AG04450 (cell line): ENCODE measurements at regions of chr15 and their contacts with region 1.

Region 1: DNA sequence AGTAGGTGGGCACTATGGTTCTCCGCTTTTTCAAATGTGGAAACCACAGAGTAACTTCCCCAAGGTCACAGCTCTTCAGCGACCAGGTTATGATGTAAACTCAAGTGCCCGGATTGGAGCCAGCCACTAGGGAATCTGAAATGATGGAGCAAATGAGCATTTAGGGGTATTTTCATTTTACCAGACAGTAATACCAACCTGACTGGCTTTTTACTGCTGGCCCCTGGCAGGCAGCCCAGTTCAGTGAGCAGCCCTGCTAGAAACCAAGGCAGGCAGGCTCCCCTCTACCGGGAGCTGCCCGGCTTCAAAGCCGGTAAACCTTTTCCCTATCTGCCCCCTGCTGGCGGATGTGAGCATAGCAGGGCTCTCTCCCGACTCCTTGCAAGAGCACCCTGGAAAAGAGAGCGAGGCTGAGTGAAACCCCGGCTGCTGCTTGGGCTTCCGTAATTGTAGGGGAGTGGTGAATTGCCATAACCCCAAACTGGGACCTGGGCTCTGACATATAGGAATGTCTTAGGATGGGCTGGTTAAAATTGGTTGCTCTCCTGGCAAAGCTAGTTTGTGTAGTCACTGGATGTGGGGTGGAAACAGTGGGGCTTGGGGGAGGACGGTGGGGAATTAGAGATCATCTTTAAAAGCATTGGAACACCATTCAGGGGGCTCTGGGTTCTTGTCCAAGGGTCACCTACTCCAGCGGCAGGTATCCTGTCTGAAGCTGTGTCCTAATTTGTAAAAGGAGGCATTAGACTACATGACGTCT is 98.0 kb upstream of the TNFAIP8L3 start:
- DNase-seq: peak; percentile 68
- H3K4me3 ChIP-seq: no peak overlapping the region
- H3K27ac ChIP-seq: no peak overlapping the region
- H3K27me3 ChIP-seq: peaks cover 26% of the 10 kb centered on the region
- CTCF ChIP-seq: peak; percentile 97

Region 2: DNA sequence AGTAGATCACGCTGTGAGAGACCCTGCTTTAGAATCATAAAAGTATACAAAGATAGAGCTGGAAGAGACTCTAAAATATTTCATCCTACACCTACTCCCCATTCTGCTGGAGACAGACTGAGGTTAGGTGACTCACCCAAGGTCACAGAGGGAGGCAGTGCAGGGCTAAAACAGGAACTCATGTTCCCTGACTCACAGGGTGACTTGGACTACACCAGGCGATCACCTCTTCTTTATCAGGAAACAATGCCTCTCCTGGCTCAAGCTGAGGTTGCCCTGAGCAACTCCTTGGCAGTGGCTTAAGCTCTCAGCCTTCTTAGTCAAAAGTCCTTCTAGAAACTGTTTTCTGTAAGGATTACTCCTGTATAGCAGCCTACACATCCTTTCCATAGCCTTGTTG is 71.6 kb before region 1 on chr15:
- CTCF ChIA-PET with region 1: no interaction called
- POLR2A ChIA-PET with region 1: no interaction called
- DNase-seq: peak; percentile 77
- H3K4me3 ChIP-seq: no peak overlapping the region
- H3K27ac ChIP-seq: peak overlapping the region; percentile 23
- H3K27me3 ChIP-seq: no peaks in the 10 kb centered on the region
- CTCF ChIP-seq: no peak

Region 3: GRCh38 chr15:51132384-51133139 is 60.1 kb before region 1 on chr15:
- CTCF ChIA-PET with region 1: interaction called, 20 read pairs
- POLR2A ChIA-PET with region 1: no interaction called
- DNase-seq: peak; percentile 81
- H3K4me3 ChIP-seq: no peak overlapping the region
- H3K27ac ChIP-seq: peak overlapping the region; percentile 80
- H3K27me3 ChIP-seq: no peaks in the 10 kb centered on the region
- CTCF ChIP-seq: peak; percentile 98

Region 4: DNA sequence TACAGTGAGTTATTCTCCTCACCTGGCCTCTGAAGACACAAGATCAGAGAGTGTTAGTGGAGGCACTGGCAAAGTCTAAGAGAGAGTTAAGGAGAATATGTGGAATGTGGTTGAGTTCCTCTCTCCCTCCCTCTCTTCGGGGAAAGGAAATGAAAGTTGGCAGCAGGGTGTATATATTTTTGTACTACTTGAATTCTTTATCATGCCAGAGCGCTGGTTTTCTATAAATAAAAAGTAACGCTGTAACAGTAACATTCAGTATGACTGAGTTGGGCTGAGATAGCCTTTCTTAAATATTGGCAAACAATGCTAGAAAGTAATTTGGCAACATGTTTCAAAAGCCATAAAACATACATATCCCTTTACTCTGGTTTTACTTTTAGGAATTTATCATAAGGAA is 20.5 kb before region 1 on chr15:
- CTCF ChIA-PET with region 1: interaction called, 14 read pairs
- POLR2A ChIA-PET with region 1: no interaction called
- DNase-seq: peak; percentile 8
- H3K4me3 ChIP-seq: no peak overlapping the region
- H3K27ac ChIP-seq: no peak overlapping the region
- H3K27me3 ChIP-seq: no peaks in the 10 kb centered on the region
- CTCF ChIP-seq: no peak

Region 5: DNA sequence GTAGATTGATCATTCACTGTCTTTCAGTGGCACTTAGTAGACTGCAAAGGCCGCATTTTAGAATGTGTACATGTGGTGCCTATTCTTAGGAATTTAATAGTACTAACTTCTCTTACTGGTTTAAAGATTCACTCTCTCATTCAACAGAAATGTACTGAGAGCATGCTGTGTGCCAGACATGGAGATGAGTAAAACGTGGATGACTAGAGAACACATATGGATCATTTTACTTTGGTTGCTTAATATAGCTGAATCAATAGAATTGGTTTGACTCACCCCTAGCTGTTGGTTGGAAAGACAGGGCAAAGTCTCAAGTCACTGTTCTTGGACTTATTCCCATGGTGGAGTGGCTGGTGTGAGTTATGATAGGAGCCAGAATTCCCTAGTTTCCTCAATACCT is 11.1 kb after region 1 on chr15:
- CTCF ChIA-PET with region 1: interaction called, 27 read pairs
- POLR2A ChIA-PET with region 1: no interaction called
- DNase-seq: peak; percentile 21
- H3K4me3 ChIP-seq: no peak overlapping the region
- H3K27ac ChIP-seq: no peak overlapping the region
- H3K27me3 ChIP-seq: peaks cover 12% of the 10 kb centered on the region
- CTCF ChIP-seq: no peak

Region 6: GRCh38 chr15:51317750-51318149 is 125.0 kb after region 1 on chr15:
- CTCF ChIA-PET with region 1: no interaction called
- POLR2A ChIA-PET with region 1: no interaction called
- DNase-seq: no peak
- H3K4me3 ChIP-seq: no peak overlapping the region
- H3K27ac ChIP-seq: no peak overlapping the region
- H3K27me3 ChIP-seq: peaks cover 14% of the 10 kb centered on the region
- CTCF ChIP-seq: no peak